AG04450 (cell line): ENCODE measurements at regions of chr5 and their contacts with region 1.

Region 1: DNA sequence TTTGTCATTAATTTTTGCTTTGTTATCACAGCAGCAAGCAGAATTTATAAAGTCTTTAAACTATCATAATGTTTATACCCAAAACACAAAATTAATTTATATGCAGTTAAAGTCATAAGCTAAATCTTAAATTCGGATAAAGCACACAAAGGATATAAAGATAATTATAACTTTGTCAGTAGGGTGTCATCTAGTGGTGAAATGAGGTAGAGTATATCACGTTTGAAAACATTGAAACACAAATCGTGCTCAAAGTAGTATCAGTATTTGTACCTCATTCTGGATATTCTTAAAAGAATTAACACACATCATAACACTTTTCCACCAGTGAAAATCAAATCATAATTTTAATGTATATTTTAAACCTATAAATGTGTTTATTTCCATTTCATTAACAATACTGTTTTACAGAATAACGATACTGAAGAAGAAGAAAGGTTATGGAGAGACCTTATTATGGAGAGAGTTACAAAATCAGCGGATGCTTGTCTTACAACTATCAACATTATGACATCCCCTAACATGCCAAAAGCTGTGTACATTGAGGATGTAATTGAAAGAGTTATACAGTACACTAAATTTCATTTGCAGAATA is 129.5 kb downstream of the NIPBL start:
- DNase-seq: no peak
- H3K4me3 ChIP-seq: no peak overlapping the region
- H3K27ac ChIP-seq: no peak overlapping the region
- H3K27me3 ChIP-seq: no peaks in the 10 kb centered on the region
- CTCF ChIP-seq: peak; percentile 73

Region 2: DNA sequence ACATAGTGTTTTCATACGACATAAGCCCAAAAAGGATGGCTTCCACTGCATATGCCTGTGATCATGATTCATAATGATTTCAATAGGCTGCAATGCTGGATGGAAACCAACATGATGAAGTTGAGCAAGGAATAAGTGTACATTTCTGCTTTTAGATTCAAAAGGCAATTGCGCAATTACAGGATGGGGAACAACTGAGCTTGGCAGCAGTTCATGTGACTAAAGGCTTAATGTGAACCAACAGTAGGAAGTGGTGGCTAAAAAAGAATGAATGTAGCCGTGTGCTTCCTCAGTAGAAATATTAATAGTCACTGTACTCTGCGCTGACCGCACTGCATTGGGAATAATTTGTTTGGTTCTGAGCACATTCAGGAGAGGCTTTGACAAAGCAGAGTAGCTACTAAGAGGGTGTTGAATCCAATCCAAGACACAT is 348.5 kb before region 1 on chr5:
- CTCF ChIA-PET with region 1: no interaction called
- POLR2A ChIA-PET with region 1: no interaction called
- DNase-seq: peak; percentile 97
- H3K4me3 ChIP-seq: no peak overlapping the region
- H3K27ac ChIP-seq: peak overlapping the region; percentile 88
- H3K27me3 ChIP-seq: no peaks in the 10 kb centered on the region
- CTCF ChIP-seq: no peak

Region 3: DNA sequence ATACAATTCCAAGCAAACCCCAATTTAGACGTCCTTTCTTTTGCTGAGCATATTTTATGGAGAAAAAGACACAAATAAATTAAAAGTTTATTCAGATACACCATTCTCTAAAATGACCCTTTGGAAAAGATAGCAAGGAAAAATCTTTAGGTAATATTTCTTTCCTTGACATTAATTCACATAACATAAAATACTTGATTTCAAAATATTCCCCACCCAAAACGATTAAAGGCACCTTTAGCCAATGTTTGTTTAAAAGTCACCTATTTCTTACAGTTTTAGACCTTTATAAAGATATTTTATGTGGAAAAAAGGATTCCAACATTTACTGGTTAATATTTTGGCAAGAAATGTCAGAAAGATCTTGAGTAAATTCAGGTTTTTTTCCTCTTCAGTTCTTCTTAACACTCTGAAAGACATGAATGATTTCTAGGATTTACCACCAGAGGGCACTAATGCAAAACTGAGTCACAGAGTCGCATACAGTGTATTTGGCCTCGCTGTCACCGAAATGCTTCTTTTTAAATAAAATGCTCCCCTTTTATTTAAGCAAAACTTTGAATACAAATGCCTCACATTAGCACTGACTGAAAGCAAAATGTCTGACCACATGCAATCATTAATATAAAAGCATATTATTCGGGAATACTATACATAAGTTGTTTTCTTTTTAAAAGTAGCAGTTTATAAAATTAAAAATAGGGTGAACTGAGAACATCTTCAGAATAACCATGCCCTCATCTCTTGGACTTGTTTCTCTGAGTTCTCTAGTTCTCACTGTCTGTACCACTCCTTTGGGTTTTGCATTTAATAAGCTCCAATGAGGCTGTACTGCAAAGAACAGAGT is 277.1 kb before region 1 on chr5:
- CTCF ChIA-PET with region 1: interaction called, 84 read pairs
- POLR2A ChIA-PET with region 1: no interaction called
- DNase-seq: peak; percentile 41
- H3K4me3 ChIP-seq: no peak overlapping the region
- H3K27ac ChIP-seq: no peak overlapping the region
- H3K27me3 ChIP-seq: peaks cover 3% of the 10 kb centered on the region
- CTCF ChIP-seq: peak; percentile 71

Region 4: DNA sequence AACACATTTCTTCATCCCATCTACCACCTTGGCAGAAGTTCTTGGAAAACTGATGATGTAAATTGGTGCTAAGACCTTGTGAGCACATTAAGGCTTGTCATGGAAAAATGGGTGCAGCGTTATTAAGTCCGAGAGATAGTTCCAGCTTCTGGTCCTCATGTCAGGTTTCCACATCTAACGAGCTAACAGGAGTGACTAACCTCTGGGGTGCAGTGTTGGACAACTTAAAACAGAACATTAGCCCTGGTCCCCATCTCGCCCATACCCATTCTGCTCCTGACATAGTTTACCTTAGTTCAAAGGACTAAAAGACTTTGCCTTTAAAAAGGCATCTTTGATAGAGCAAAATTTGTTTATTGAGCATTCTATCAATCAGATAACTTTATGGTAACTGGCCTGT is 271.6 kb before region 1 on chr5:
- CTCF ChIA-PET with region 1: interaction called, 84 read pairs
- POLR2A ChIA-PET with region 1: no interaction called
- DNase-seq: no peak
- H3K4me3 ChIP-seq: no peak overlapping the region
- H3K27ac ChIP-seq: no peak overlapping the region
- H3K27me3 ChIP-seq: peaks cover 8% of the 10 kb centered on the region
- CTCF ChIP-seq: no peak

Region 5: DNA sequence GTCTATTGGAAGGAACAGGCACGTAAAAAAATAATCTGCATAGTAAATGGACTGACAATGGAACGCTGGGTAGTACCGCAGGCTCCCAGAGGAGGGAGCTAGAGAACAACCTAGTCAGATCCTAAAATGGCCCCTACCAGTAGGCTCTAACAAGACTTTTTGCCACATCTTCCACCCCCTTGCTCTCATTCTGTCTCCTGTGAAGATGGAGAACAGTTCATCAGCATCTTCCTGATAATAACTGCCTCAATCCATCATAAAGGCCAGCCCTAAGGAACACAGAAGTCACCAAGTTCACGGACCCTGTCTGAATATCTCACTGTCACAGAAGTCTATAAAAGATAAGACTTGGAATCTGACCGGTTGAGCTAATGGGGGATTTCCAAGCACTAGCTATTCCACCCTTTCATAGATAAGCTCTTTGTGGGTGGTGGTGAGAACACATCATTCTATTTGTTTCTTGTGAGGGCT is 266.3 kb before region 1 on chr5:
- CTCF ChIA-PET with region 1: interaction called, 28 read pairs
- POLR2A ChIA-PET with region 1: no interaction called
- DNase-seq: peak; percentile 10
- H3K4me3 ChIP-seq: no peak overlapping the region
- H3K27ac ChIP-seq: no peak overlapping the region
- H3K27me3 ChIP-seq: peaks cover 12% of the 10 kb centered on the region
- CTCF ChIP-seq: peak; percentile 79

Region 6: DNA sequence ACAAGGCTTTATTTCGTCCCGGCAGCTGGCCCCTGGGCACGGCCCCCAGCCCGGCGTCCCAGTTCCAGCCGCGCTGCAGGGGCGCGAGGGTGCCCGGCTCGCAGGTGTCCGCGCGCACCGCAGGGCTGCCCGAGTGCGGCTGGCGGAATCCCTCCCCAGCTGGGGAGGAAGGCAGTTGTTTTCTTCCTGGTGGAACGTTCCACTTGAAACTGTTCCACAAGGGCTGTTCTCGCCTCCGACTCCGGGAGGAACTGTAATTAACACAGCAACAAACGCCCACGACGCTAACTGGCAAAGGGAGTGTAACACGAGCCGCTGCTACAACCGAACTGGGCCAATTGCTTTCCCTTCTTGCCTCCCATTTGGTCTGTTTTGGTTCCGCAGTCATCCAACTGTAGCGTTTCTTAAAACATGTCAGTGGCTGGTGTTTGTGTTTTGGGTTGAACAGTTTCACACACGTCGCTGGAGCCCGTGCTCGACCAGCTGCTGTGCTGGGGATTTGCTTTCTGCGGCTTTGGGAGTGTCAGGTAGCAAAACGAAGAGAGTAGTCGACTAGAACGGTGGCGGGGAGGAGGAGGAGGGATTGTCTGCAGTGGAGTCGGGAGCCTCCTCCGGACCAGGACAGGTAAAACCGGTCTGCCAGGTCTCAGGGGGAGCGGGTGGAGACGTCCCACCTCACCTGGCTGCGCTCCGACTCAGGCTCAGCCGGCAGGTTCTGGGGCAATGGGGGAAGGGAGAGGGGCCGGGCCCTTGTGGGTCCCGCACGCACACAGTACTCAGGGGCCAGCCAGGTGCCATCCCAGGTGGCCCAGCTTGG is 261.1 kb before region 1 on chr5:
- CTCF ChIA-PET with region 1: interaction called, 28 read pairs
- POLR2A ChIA-PET with region 1: no interaction called
- DNase-seq: no peak
- H3K4me3 ChIP-seq: peak overlapping the region; percentile 65
- H3K27ac ChIP-seq: no peak overlapping the region
- H3K27me3 ChIP-seq: peaks cover 25% of the 10 kb centered on the region
- CTCF ChIP-seq: no peak; the same call in 1 of the 2 replicates

Region 7: DNA sequence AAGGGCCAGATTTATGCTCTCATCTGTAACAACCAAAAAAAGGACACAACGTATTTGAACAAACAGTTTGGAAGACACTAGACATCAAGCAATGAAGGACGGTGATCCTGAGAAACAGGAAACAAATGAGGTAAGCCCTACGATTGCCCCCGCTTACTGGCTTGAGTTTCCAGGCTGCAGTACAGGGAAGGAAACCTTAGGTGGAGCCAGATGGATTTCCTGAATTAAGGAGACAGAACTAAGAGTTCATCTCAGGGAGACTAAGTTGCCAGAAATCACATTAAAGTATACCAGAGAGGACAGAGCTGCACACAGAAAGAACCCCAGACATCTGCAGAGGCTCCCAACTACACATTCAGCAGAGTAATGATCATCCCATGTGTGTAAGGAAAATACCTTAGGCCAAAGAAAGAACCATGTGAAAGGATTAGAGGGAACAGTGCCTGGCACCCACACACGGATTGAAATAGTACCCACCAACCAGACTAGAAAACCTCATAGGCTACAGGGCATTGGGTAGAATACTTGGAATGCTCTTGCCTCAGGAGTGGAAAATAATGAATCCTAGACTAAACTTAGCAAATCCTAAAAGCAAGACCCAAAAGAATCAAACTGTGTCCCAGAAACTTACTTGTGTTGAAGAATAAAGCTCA is 228.8 kb before region 1 on chr5:
- CTCF ChIA-PET with region 1: interaction called, 24 read pairs
- POLR2A ChIA-PET with region 1: no interaction called
- DNase-seq: peak; percentile 8
- H3K4me3 ChIP-seq: no peak overlapping the region
- H3K27ac ChIP-seq: no peak overlapping the region
- H3K27me3 ChIP-seq: no peaks in the 10 kb centered on the region
- CTCF ChIP-seq: peak; percentile 56